ENCODE measurements at regions of chr20 and their contacts with region 1.

Region 1: GRCh38 chr20:64038565-64039292 is 2.7 kb downstream of the C20orf204 start:
- DNase-seq: peak; percentile 86
- H3K4me3 Mint-ChIP-seq: peak overlapping the region; percentile 67
- H3K27ac Mint-ChIP-seq: peak overlapping the region; percentile 71
- H3K4me1 Mint-ChIP-seq: peaks cover 70% of the 10 kb centered on the region
- H3K27me3 Mint-ChIP-seq: peaks cover 40% of the 10 kb centered on the region

Region 2: DNA sequence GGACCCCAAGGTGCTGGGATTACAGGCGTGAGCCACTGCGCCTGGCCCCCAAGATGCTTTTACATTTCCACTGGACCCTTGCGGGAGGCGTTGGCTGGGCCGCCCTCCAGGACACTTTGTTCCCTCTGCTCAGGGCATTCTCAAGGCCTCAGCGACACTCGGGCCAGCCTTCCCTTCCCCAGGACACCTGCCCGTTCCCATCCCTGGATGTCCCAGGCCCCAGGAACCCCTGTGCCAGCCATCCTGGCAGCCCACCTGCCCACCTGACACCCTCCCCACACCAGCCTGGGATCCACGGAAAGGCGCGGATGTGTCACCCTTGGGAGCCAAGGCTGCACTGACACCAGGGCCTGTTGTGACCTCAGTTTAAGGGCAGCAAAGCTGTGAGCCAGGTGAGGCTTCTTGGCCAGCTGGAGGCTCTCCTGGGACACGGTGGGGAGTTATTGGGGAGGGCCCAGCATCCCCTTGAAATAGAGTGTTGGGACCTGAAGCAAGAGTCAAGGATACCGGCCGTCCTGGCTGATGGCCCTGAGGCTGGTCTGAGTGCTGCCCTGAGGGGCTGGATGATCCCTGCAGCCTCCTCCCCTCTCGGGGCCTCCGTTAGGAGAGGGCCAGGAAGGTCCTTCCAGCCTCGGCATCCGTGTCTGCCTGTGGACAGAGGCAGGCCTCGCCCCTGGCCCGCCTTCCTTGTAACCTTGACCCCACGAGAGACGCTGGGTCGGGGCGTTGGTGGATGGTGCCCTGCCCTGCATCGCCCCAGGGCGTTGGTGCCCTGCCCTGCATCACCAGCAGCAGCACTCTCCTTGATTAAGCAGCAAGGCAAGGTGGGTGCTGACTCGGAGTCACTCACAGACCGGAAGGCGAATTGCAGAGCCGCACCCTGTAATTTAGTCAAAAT is 947.8 kb before region 1 on chr20:
- CTCF ChIA-PET with region 1: no interaction called
- DNase-seq: peak; percentile 6
- H3K4me3 Mint-ChIP-seq: no peak overlapping the region
- H3K27ac Mint-ChIP-seq: no peak overlapping the region
- H3K4me1 Mint-ChIP-seq: no peaks in the 10 kb centered on the region
- H3K27me3 Mint-ChIP-seq: peaks cover 15% of the 10 kb centered on the region

Region 3: DNA sequence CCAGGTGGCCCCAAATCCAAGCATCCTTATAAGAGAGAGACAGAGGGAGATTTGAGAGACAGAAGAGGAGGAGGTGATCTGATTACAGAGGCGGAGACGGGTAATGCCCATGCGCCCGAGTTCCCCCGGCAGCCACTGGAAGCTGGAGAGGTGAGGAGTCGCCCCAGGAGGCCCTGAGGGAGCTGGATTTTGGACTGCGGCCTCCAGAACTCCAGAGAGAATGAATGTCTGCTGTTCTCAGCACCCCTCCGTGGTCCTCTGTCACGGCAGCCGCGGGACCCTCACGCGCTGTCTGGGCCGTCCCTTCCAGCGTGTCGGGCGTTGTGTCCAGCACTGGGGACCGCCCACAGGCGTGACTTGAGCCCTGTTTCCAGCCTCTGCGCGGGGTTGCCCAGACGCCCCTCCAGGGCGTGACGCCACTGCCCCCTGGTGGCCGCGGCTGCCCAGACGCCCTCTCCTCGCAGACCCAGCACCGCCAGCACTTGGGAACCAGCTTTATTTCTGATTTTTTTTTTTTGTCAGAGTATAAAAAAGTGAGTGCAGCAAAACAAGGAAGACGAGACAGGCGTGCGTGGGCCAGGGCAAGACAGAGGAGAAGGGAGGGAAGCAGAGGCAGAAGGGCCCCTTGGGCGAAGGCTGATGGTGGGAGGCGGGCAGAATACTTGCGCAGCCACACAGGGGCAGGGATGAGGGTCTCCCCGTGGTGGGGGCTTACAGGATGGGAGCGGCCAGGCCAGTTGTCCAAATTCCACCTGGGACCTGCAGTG is 64.9 kb before region 1 on chr20:
- CTCF ChIA-PET with region 1: interaction called, 17 read pairs
- DNase-seq: peak; percentile 82
- H3K4me3 Mint-ChIP-seq: no peak overlapping the region
- H3K27ac Mint-ChIP-seq: no peak overlapping the region
- H3K4me1 Mint-ChIP-seq: peaks cover 58% of the 10 kb centered on the region
- H3K27me3 Mint-ChIP-seq: peaks cover 16% of the 10 kb centered on the region

Region 4: GRCh38 chr20:63980806-63981728 is 57.7 kb before region 1 on chr20 and contains the start of gene PRPF6:
- CTCF ChIA-PET with region 1: interaction called, 89 read pairs
- DNase-seq: peak; percentile 96
- H3K4me3 Mint-ChIP-seq: peak within 1 kb of the TSS; percentile 95
- H3K27ac Mint-ChIP-seq: peak within 1 kb of the TSS; percentile 96
- H3K4me1 Mint-ChIP-seq: peaks cover 67% of the 10 kb centered on the region
- H3K27me3 Mint-ChIP-seq: no peaks in the 10 kb centered on the region

Region 5: GRCh38 chr20:64053841-64054661 is 15.3 kb after region 1 on chr20:
- CTCF ChIA-PET with region 1: interaction called, 27 read pairs
- DNase-seq: no peak
- H3K4me3 Mint-ChIP-seq: no peak overlapping the region
- H3K27ac Mint-ChIP-seq: no peak overlapping the region
- H3K4me1 Mint-ChIP-seq: peaks cover 34% of the 10 kb centered on the region
- H3K27me3 Mint-ChIP-seq: peaks cover 62% of the 10 kb centered on the region

Region 6: GRCh38 chr20:64062596-64063388 is 24.1 kb after region 1 on chr20 and contains the start of gene TCEA2:
- CTCF ChIA-PET with region 1: interaction called, 17 read pairs
- DNase-seq: peak; percentile 97
- H3K4me3 Mint-ChIP-seq: peak within 1 kb of the TSS; percentile 86
- H3K27ac Mint-ChIP-seq: peak within 1 kb of the TSS; percentile 58
- H3K4me1 Mint-ChIP-seq: peaks cover 62% of the 10 kb centered on the region
- H3K27me3 Mint-ChIP-seq: peaks cover 22% of the 10 kb centered on the region

Measured in activated naive CD4-positive, alpha-beta T cell treated with anti-CD3 and anti-CD28 coated beads, Interleukin-2, amount 10 ng/mL, durations not matched to agents 7 days and 5 days (primary cell).